Astrocyte of the cerebellum (primary cell): ENCODE measurements at regions of chr20 and their contacts with region 1.

Region 1: DNA sequence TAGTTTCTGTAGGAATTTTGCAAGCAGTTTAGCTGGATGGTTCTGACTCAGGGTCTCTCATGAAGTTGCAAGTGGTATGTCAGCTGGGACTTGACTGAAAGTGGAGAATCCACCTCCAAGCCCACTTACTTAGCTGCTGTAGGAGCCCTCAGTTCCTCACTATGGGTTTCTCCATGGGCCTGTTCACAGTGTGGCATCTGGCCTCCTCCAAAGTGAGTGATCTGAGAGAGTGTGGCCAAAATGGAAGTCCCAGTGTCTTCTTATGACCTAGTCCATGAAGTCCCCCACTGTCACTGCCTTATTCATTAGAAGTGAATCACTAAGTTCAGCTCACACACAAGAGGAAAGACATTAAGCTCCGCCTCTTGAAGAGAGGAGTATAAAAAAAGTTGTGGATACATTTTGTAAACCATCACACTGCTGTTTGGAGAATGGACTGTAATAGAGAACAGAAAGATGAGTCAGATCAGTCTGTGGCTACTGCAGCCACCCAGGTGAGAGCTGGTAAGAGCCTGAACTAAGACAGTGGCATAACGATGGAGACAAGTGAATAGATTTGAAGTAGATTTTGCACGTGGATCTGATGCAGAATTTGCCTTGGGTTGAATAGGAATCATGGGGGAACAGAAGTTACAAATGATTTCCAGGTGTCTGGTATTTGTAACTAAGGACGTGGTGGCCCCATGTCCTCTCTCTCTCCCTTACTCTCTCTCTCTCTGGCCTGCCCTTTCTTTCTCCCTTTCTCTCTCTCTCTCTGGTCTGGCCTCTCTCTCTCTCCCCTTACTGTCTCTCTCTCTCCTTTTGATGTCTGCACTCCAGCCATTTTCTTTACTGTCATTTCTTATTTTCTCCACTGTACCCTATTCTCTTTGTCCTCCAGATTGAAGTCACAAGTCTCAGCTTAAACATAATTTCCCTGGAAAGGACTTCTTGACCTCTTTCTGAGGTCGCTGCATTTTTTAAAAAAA is 4.7 kb upstream of the NELFCD start:
- DNase-seq: no peak
- H3K4me3 ChIP-seq: no peak overlapping the region
- CTCF ChIP-seq: no peak

Region 2: DNA sequence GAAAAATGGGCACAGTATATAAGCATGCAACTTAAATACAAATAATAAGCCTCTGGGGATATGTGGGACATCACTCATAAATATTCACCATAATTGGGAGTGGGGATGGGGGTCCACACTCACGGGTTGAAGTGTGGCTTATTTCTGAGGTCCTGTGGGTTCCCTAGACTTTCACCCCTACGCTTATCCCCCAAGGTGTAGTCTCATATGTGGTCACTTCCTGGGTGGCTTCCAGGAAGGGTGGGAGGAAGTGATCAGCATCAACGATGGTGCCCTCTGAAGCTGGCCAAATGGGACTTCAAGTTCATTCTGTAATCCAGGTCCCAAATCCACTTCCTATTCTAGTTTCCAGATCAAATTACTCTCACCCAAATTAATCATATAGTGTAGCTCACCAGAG is 64.4 kb before region 1 on chr20:
- in situ Hi-C with region 1: loop called (anchors 10 kb)
- DNase-seq: no peak
- H3K4me3 ChIP-seq: no peak overlapping the region
- CTCF ChIP-seq: no peak